Endothelial cell of umbilical vein (primary cell): ENCODE measurements at regions of chr7 and their contacts with region 1.

Region 1: DNA sequence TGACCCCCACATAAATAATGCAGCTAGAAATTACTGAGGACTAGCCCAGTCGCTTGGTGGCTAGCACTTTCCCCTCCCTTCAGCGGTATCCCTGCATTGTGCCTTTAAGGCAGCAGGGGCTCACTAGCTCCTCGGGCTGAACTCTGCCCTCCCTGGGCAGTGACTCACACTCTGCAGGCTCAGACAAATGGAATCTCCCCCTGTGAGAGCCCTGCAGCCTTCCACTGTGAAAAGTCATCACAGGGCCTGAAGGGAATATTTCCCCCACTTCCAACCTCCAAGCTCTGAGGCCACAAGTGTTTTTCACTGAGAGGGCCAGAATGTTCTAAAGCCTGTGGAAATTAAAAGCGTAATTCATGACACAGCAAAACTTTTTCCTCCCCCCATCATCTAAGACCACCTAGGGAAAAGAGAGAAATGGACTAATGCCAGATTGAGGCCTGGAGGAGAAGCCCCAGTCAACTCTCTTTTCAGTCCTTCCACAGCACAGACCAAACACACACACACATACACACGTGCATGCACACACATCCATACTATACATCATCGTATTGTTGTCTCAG is 93.6 kb upstream of the COL1A2 start:
- DNase-seq: peak; percentile 93
- H3K4me3 ChIP-seq: no peak overlapping the region
- H3K27ac ChIP-seq: peak overlapping the region; percentile 72
- H3K4me1 ChIP-seq: peaks cover 24% of the 10 kb centered on the region
- H3K27me3 ChIP-seq: no peaks in the 10 kb centered on the region
- CTCF ChIP-seq: no peak
- POLR2A ChIP-seq: no peak

Region 2: GRCh38 chr7:92904292-92905131 is 1396.6 kb before region 1 on chr7:
- CTCF ChIA-PET with region 1: no interaction called
- POLR2A ChIA-PET with region 1: no interaction called
- dilution Hi-C with region 1: no loop called
- intact Hi-C with region 1: no loop called
- DNase-seq: peak; percentile 56
- H3K4me3 ChIP-seq: no peak overlapping the region
- H3K27ac ChIP-seq: no peak overlapping the region
- H3K4me1 ChIP-seq: no peaks in the 10 kb centered on the region
- H3K27me3 ChIP-seq: no peaks in the 10 kb centered on the region
- CTCF ChIP-seq: no peak
- POLR2A ChIP-seq: no peak

Region 3: DNA sequence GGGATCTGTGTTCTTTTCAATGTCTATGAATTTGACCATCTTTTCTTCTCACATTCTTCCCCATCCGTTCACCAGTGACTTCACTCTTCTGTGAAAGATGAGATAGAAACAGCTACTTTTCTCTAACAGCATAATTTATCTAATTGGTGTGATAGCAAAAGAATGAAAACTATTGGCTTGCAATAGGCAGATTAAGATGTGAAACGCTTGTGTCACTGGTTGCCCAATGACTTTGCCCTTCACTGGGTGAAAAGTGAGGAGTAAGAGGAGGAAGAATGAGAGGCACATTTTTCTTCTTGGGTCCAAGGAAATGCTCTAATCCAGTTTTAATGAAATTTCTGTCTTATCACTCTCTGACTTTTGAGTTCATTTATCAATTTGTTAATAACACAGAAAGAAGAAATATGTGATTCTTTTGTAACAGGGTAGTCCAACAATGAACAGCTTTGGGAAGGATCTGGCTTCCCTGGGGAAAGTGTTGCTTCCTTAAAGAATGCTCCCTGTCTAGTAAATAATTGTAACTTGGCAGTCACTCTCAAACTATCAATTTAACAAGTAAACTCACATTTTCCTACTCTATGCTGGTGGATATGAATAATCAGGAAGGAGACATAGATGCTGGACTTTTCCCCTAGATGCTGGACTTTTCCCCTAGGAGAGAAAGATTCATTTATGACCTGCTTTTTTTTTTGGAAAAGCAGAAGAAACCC is 332.0 kb before region 1 on chr7:
- CTCF ChIA-PET with region 1: no interaction called
- POLR2A ChIA-PET with region 1: no interaction called
- dilution Hi-C with region 1: no loop called
- intact Hi-C with region 1: no loop called
- DNase-seq: peak; percentile 17
- H3K4me3 ChIP-seq: no peak overlapping the region
- H3K27ac ChIP-seq: no peak overlapping the region
- H3K4me1 ChIP-seq: no peaks in the 10 kb centered on the region
- H3K27me3 ChIP-seq: no peaks in the 10 kb centered on the region
- CTCF ChIP-seq: no peak
- POLR2A ChIP-seq: no peak

Region 4: DNA sequence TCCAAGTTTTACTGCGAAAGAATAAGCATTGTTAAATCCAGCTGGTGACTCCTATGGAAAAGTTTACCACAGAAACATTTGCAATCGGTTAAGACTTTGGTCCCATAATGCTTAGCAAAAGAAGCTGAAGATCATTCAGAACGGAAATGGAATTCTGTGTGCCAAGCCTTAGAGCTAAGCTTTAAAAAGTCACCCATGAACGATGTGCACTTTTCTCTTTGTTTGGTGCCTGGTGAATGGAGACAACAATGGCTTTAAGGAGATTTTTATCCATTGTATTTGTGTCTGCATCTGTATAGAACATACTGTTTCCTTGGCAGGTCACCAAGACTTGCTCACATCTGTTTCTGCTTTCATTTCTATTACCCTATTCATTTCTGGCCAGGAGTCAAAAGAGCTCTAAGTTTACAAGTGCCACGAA is 67.3 kb after region 1 on chr7:
- CTCF ChIA-PET with region 1: interaction called, 30 read pairs
- POLR2A ChIA-PET with region 1: interaction called, 7 read pairs
- dilution Hi-C with region 1: no loop called
- intact Hi-C with region 1: loop called (anchors 1 kb)
- DNase-seq: peak; percentile 97
- H3K4me3 ChIP-seq: peak overlapping the region in 1 of 3 experiments; percentile 30
- H3K27ac ChIP-seq: peak overlapping the region; percentile 88
- H3K4me1 ChIP-seq: peaks cover 15% of the 10 kb centered on the region
- H3K27me3 ChIP-seq: no peaks in the 10 kb centered on the region
- CTCF ChIP-seq: no peak
- POLR2A ChIP-seq: no peak

Region 5: GRCh38 chr7:94374231-94374630 is 73.1 kb after region 1 on chr7:
- CTCF ChIA-PET with region 1: interaction called, 37 read pairs
- POLR2A ChIA-PET with region 1: interaction called, 4 read pairs
- dilution Hi-C with region 1: no loop called
- intact Hi-C with region 1: loop called (anchors 1 kb)
- DNase-seq: peak; percentile 92
- H3K4me3 ChIP-seq: no peak overlapping the region
- H3K27ac ChIP-seq: peak overlapping the region; percentile 85
- H3K4me1 ChIP-seq: peaks cover 21% of the 10 kb centered on the region
- H3K27me3 ChIP-seq: no peaks in the 10 kb centered on the region
- CTCF ChIP-seq: no peak
- POLR2A ChIP-seq: no peak